ENCODE measurements at regions of chr3 and their contacts with region 1.

Region 1: GRCh38 chr3:70064194-70064779 is 64.8 kb downstream of the SAMMSON start:
- DNase-seq: no peak
- H3K4me3 ChIP-seq: no peak overlapping the region
- H3K27ac ChIP-seq: peak overlapping the region; percentile 55 to 84 (median 83)
- H3K4me1 ChIP-seq: peaks cover 5 to 58% (median 49%) of the 10 kb centered on the region in 4 donors
- H3K27me3 ChIP-seq: no peaks in the 10 kb centered on the region
- CTCF ChIP-seq: peak; percentile 70 to 88 (median 76)
- EP300 ChIP-seq: no peak
- POLR2A ChIP-seq: no peak

Region 2: DNA sequence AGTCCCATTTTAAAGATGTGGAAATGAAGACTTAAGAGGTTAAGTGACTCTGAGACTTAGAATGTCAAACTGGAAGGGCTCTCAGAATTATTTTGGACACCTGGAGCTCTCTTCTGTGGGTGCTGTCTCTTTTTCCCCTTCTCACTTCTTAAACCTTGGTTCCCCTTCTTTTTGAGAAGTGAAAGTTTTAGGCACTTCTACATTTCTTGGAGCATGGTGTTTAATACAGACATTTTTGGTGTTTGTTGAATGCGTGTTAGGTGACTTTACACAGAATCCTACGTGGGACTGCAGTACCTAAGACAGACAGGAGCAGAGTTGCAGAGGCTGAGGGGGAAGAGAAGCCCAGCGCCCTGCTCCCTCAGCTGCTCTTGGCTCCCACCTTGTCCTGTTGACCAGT is 114.8 kb after region 1 on chr3:
- intact Hi-C with region 1: no loop called
- DNase-seq: no peak
- H3K4me3 ChIP-seq: no peak overlapping the region
- H3K27ac ChIP-seq: peak overlapping the region in 1 of 4 donors; percentile 13
- H3K4me1 ChIP-seq: peaks cover 0 to 18% (median 12%) of the 10 kb centered on the region in 4 donors
- H3K27me3 ChIP-seq: no peaks in the 10 kb centered on the region
- CTCF ChIP-seq: no peak
- EP300 ChIP-seq: no peak
- POLR2A ChIP-seq: no peak

Region 3: DNA sequence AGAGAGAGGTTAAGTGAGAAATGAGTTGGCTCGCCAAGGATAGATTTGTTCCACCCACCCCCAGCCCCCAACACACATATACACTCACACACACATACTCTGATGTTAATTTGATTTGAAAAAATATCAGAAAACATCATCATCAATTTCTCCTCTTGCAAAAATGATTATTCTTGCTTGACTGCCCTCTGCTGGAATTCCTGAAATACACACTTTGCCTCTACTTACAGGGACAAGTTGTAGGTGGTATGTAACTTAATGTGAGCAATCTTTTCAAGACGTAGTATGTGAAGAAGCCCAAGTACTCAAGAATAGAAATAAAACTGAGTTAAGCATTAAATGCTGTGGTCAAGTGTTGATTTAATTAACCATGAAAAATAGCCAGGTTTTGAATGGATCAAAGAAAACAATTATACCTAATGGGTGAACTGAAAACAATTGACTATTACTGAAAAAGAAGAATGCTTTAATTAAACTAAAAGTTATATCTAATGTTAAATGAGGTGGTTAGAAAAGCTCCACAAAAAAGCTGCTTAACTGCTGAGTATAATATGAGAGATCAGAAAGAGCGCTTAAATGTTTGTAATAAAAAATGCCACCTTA is 294.8 kb after region 1 on chr3:
- intact Hi-C with region 1: loop called (anchors 5 kb)
- DNase-seq: no peak
- H3K4me3 ChIP-seq: no peak overlapping the region
- H3K27ac ChIP-seq: no peak overlapping the region
- H3K4me1 ChIP-seq: peaks cover 0 to 8% (median 4%) of the 10 kb centered on the region in 4 donors
- H3K27me3 ChIP-seq: no peaks in the 10 kb centered on the region
- CTCF ChIP-seq: peak; percentile 61 to 71 (median 62)
- EP300 ChIP-seq: no peak
- POLR2A ChIP-seq: no peak

Region 4: DNA sequence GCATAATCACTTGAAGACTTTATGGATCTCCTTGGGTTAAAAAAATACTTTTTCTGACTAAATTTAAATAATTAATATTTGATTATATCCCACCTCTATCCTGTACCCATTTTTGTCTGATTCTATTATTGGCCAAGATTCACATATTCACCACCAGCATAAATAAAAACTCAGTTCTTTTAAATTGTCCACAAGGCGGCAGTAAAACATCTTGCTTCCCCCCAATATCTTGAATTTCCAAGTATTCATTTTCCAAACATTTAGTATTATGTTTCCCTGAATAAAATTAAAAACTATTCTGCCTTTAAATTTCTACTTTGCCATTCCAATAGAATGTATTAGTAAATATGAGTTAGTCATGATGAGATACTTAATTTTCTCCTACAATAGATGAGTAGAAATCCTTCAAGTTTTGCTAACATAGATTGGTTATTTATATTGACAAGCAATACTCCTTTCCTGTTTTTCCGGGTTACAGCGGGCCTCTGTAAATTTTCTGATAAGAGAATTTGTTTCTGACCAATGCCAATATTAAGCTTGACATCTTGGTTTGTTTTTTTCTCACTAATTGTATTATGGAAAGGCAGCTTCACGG is 466.9 kb after region 1 on chr3:
- intact Hi-C with region 1: loop called (anchors 10 kb)
- DNase-seq: no peak
- H3K4me3 ChIP-seq: no peak overlapping the region
- H3K27ac ChIP-seq: peak overlapping the region in 3 of 4 donors; percentile 5 to 55 (median 22)
- H3K4me1 ChIP-seq: peaks cover 0 to 36% (median 29%) of the 10 kb centered on the region in 4 donors
- H3K27me3 ChIP-seq: no peaks in the 10 kb centered on the region
- CTCF ChIP-seq: peak; percentile 62 to 67 (median 63)
- EP300 ChIP-seq: no peak
- POLR2A ChIP-seq: no peak